Natural killer cell (primary cell): ENCODE measurements at regions of chr1 and their contacts with region 1.

Region 1: GRCh38 chr1:78617615-78618026 is 2.6 kb upstream of the IFI44L start:
- DNase-seq: peak; percentile 20 to 90
- ATAC-seq: peak; percentile 75 to 88 (median 83)
- H3K4me3 ChIP-seq: no peak overlapping the region
- H3K4me3 Mint-ChIP-seq: no peak overlapping the region
- H3K27ac ChIP-seq: no peak overlapping the region
- H3K27ac Mint-ChIP-seq: no peak overlapping the region
- H3K4me1 ChIP-seq: peaks cover 8% of the 10 kb centered on the region
- H3K4me1 Mint-ChIP-seq: peaks cover 31 to 40% of the 10 kb centered on the region in 2 donors
- H3K27me3 ChIP-seq: no peaks in the 10 kb centered on the region
- H3K27me3 Mint-ChIP-seq: no peaks in the 10 kb centered on the region
- CTCF ChIP-seq: peak; percentile 76

Region 2: GRCh38 chr1:78145105-78145580 is 472.5 kb before region 1 on chr1:
- intact Hi-C with region 1: loop called (anchors 10 kb)
- DNase-seq: peak in 1 of 2 donors; percentile 61
- ATAC-seq: peak; percentile 57 to 76 (median 74)
- H3K4me3 ChIP-seq: no peak overlapping the region
- H3K4me3 Mint-ChIP-seq: no peak overlapping the region
- H3K27ac ChIP-seq: no peak overlapping the region
- H3K27ac Mint-ChIP-seq: no peak overlapping the region
- H3K4me1 ChIP-seq: peaks cover 5% of the 10 kb centered on the region
- H3K4me1 Mint-ChIP-seq: peaks cover 6 to 7% of the 10 kb centered on the region in 2 donors
- H3K27me3 ChIP-seq: no peaks in the 10 kb centered on the region
- H3K27me3 Mint-ChIP-seq: peaks cover 6 to 18% of the 10 kb centered on the region in 2 donors
- CTCF ChIP-seq: peak; percentile 80

Region 3: GRCh38 chr1:78649628-78650027 is 32.0 kb after region 1 on chr1 and contains the start of gene IFI44:
- intact Hi-C with region 1: loop called (anchors 1 kb)
- DNase-seq: peak; percentile 38 to 91
- ATAC-seq: peak; percentile 86 to 90 (median 87)
- H3K4me3 ChIP-seq: peak within 1 kb of the TSS; percentile 46
- H3K4me3 Mint-ChIP-seq: peak within 1 kb of the TSS; percentile 89
- H3K27ac ChIP-seq: peak within 1 kb of the TSS; percentile 67
- H3K27ac Mint-ChIP-seq: peak within 1 kb of the TSS; percentile 84 to 87
- H3K4me1 ChIP-seq: peaks cover 14% of the 10 kb centered on the region
- H3K4me1 Mint-ChIP-seq: peaks cover 73 to 84% of the 10 kb centered on the region in 2 donors
- H3K27me3 ChIP-seq: no peaks in the 10 kb centered on the region
- H3K27me3 Mint-ChIP-seq: no peaks in the 10 kb centered on the region
- CTCF ChIP-seq: no peak
- total RNA-seq, gene IFI44: 34.6 to 60.2 (median 35.5) TPM

Region 4: DNA sequence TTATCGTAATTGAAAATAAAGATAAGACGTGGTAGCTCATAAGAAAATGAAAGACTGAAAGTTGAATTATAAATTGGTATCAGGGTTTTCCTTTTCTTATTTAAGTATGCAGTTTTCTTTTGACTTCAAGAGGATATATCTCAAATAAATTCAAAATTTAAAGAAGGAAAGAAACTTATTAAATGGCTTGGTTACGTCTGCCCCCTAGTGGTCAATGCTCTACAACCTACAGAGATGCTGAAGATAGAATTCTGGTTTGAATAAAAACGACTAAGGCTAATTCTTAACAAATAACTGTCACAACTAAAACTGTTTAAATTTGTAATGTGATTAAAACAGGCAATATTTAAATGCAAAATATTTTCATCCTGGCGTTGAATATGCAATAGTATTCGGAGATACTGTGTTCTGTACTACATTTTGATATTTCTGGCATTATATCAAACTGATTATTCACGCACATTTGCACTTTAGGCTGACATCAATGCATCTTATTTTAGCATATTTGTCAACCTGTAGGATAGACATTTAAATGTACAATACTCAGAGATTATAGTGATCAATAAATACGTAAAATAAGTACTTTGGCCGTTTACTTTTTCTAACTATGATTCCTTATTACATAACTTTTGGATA is 58.8 kb after region 1 on chr1:
- intact Hi-C with region 1: loop called (anchors 1 kb)
- DNase-seq: peak in 1 of 2 donors; percentile 87
- ATAC-seq: peak in 2 of 3 donors; percentile 59
- H3K4me3 ChIP-seq: no peak overlapping the region
- H3K4me3 Mint-ChIP-seq: no peak overlapping the region
- H3K27ac ChIP-seq: no peak overlapping the region
- H3K27ac Mint-ChIP-seq: no peak overlapping the region
- H3K4me1 ChIP-seq: no peaks in the 10 kb centered on the region
- H3K4me1 Mint-ChIP-seq: peaks cover 7% of the 10 kb centered on the region in 2 donors
- H3K27me3 ChIP-seq: no peaks in the 10 kb centered on the region
- H3K27me3 Mint-ChIP-seq: peaks cover 0 to 7% of the 10 kb centered on the region in 2 donors
- CTCF ChIP-seq: peak; percentile 91